CD14-positive monocyte (primary cell): ENCODE measurements at regions of chr22 and their contacts with region 1.

Region 1: GRCh38 chr22:46576556-46577367 is 39.3 kb upstream of the CELSR1 start:
- DNase-seq: peak in 2 of 3 donors; percentile 47 to 48
- H3K4me3 ChIP-seq: peak overlapping the region; percentile 38 to 84 (median 64)
- H3K4me3 Mint-ChIP-seq: peak overlapping the region; percentile 78 to 79
- H3K27ac ChIP-seq: peak overlapping the region in 1 of 2 donors; percentile 26
- H3K27ac Mint-ChIP-seq: peak overlapping the region in 3 of 7 donors; percentile 35 to 77 (median 54)
- H3K4me1 ChIP-seq: peaks cover 64 to 77% of the 10 kb centered on the region in 2 donors
- H3K4me1 Mint-ChIP-seq: peaks cover 73% of the 10 kb centered on the region
- H3K27me3 ChIP-seq: no peaks in the 10 kb centered on the region
- H3K27me3 Mint-ChIP-seq: peaks cover 0 to 10% (median 4%) of the 10 kb centered on the region in 3 donors
- CTCF ChIP-seq: no peak

Region 2: GRCh38 chr22:46444390-46444854 is 132.3 kb before region 1 on chr22:
- intact Hi-C with region 1: no loop called
- DNase-seq: no peak
- H3K4me3 ChIP-seq: no peak overlapping the region
- H3K4me3 Mint-ChIP-seq: no peak overlapping the region
- H3K27ac ChIP-seq: no peak overlapping the region
- H3K27ac Mint-ChIP-seq: no peak overlapping the region
- H3K4me1 ChIP-seq: no peaks in the 10 kb centered on the region
- H3K4me1 Mint-ChIP-seq: no peaks in the 10 kb centered on the region
- H3K27me3 ChIP-seq: no peaks in the 10 kb centered on the region
- H3K27me3 Mint-ChIP-seq: peaks cover 0 to 3% (median 2%) of the 10 kb centered on the region in 3 donors
- CTCF ChIP-seq: no peak

Region 3: GRCh38 chr22:46613606-46614021 is 36.9 kb after region 1 on chr22:
- intact Hi-C with region 1: loop called (anchors 5 kb)
- DNase-seq: peak in 2 of 3 donors; percentile 38 to 39
- H3K4me3 ChIP-seq: peak overlapping the region in 1 of 3 experiments; percentile 63
- H3K4me3 Mint-ChIP-seq: peak overlapping the region; percentile 73 to 82
- H3K27ac ChIP-seq: peak overlapping the region in 1 of 2 donors; percentile 73
- H3K27ac Mint-ChIP-seq: peak overlapping the region in 6 of 7 donors; percentile 59 to 87 (median 74)
- H3K4me1 ChIP-seq: peaks cover 58 to 82% of the 10 kb centered on the region in 2 donors
- H3K4me1 Mint-ChIP-seq: peaks cover 66% of the 10 kb centered on the region
- H3K27me3 ChIP-seq: no peaks in the 10 kb centered on the region
- H3K27me3 Mint-ChIP-seq: no peaks in the 10 kb centered on the region
- CTCF ChIP-seq: no peak